K562 (cell line): ENCODE measurements at regions of chr7 and their contacts with region 1.

Region 1: DNA sequence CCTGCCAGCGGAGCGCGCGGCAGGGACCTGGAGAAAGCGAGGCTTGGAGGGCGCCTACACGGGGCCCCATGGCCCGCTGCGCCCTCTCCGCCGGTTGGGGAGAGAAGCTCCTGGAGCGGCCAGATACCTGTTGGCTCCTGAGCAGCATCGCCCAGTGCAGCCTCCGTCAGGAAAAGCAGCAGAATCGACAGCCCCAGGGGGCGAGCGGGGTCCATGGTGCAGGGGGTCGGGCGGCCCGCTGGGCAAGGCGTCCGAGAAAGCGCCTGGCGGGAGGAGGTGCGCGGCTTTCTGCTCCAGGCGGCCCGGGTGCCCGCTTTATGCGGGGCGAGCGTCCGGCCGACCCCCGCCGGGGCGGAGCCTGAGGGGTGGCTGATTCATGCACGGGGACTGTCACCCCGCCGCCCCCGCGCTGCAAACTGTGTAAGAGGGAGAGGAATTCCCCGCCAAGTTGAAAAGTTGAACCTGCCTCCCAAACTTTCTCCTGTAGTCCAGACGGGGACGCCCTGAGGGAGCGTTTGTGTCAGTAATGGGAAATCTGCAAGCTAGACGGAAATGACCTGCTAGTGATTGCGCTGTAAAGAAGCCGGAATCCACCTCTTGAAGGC is at the start of gene TFPI2:
- DNase-seq: peak in 2 of 4 experiments; percentile 12 to 23
- ATAC-seq: peak; percentile 68
- H3K4me3 ChIP-seq: no peak within 1 kb of the TSS
- H3K27ac ChIP-seq: no peak within 1 kb of the TSS
- H3K4me1 ChIP-seq: peaks cover 0 to 10% of the 10 kb centered on the region in 2 experiments; a peak in 1 of 5 replicates
- H3K27me3 ChIP-seq: peaks cover 14 to 22% of the 10 kb centered on the region in 2 experiments
- CTCF ChIP-seq: no peak
- EP300 ChIP-seq: no peak
- POLR2A ChIP-seq: no peak
- RAD21 ChIP-seq: no peak; a peak in 1 of 4 replicates
- polyA plus RNA-seq, gene TFPI2: not detected

Region 2: DNA sequence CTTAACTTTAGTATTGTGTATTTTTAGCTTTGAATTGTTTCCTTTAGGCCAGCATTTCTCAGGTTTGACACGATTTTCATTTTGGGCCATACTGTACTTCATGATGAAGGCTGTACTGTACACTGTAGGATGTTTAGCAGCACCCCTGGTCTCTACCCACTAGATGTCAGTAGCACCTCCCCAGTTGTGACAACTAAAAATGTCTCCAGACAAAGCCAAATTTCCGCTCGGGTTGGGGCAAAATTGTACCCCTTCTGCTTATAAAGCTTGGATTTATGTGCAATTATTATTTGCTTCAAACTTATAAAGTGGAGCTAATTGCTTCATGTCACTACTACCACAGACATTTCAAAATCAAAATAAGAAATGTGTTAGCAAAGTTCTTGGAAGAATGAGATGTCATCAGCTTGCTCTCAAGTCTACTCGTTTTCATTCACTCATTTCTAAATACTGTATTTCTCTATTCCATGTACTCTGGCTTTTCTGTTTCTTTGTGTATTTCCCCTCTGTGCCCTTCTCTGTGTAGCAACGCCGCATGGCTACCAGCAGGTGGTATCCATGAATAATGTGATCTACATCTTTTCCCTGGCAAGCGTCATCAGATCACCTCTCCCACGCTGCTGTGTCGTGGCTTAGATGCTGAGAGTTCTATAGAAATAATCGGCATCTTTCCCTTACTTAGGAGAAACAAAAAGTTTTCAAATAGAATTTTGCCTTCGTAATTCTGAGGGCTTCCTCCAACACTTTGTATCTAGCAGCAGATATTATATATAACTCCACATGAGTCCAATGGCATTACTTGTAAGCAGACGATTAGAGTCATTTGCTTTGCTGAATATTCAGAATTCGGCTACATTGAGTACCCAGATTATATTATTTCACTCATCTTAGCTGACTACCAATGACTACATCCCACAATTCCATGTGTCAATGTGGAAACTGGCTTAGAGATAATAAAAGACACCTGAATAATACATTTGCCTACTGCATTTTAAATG is 268.2 kb before region 1 on chr7:
- CTCF ChIA-PET with region 1: no interaction called
- POLR2A ChIA-PET with region 1: no interaction called
- in situ Hi-C with region 1: no loop called
- intact Hi-C with region 1: loop called (anchors 10 kb)
- DNase-seq: peak; percentile 35 to 59 (median 52)
- ATAC-seq: peak; percentile 98
- H3K4me3 ChIP-seq: no peak overlapping the region
- H3K27ac ChIP-seq: no peak overlapping the region
- H3K4me1 ChIP-seq: 0 out of 5 replicates have a peak, but pooled peaks cover 0 to 3% of the 10 kb centered on the region in 2 experiments
- H3K27me3 ChIP-seq: no peaks in the 10 kb centered on the region
- CTCF ChIP-seq: peak; percentile 60 to 63 (median 61)
- EP300 ChIP-seq: no peak
- POLR2A ChIP-seq: no peak
- RAD21 ChIP-seq: peak; percentile 44 to 53